Natural killer cell (primary cell): ENCODE measurements at regions of chr20 and their contacts with region 1.

Region 1: DNA sequence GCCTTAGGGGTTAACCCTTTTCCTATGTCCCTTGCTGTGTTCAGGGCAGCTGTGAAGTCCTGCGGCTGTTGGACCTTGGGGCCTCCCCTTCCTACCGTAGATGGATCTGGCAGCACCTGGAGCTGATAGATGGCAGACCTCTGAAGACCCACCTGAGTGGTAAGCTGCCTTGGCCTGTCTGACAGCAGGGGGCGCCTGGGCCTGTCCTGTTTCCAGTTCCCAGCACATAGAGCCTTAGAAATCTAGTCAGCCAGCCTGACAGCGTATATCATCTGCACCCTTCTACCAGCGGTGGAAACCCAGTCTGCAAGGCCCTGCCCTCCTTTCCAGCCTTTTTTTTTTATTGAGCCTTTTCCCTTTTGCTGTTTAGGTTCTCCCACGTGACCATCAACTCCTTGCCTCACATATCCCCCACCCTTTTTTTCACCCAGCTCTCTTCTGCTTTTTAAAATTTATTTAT is 26.6 kb downstream of the CNBD2 start:
- DNase-seq: peak; percentile 58 to 87
- ATAC-seq: peak; percentile 74 to 81 (median 78)
- H3K4me3 ChIP-seq: no peak overlapping the region
- H3K4me3 Mint-ChIP-seq: no peak overlapping the region
- H3K27ac ChIP-seq: no peak overlapping the region
- H3K27ac Mint-ChIP-seq: no peak overlapping the region
- H3K4me1 ChIP-seq: no peaks in the 10 kb centered on the region
- H3K4me1 Mint-ChIP-seq: peaks cover 0 to 7% of the 10 kb centered on the region in 2 donors
- H3K27me3 ChIP-seq: no peaks in the 10 kb centered on the region
- H3K27me3 Mint-ChIP-seq: peaks cover 0 to 8% of the 10 kb centered on the region in 2 donors
- CTCF ChIP-seq: peak; percentile 71

Region 2: GRCh38 chr20:36132802-36133211 is 137.8 kb after region 1 on chr20:
- intact Hi-C with region 1: loop called (anchors 1 kb)
- DNase-seq: no peak
- ATAC-seq: no peak
- H3K4me3 ChIP-seq: no peak overlapping the region
- H3K4me3 Mint-ChIP-seq: no peak overlapping the region
- H3K27ac ChIP-seq: no peak overlapping the region
- H3K27ac Mint-ChIP-seq: no peak overlapping the region
- H3K4me1 ChIP-seq: no peaks in the 10 kb centered on the region
- H3K4me1 Mint-ChIP-seq: no peaks in the 10 kb centered on the region
- H3K27me3 ChIP-seq: no peaks in the 10 kb centered on the region
- H3K27me3 Mint-ChIP-seq: no peaks in the 10 kb centered on the region
- CTCF ChIP-seq: no peak

Region 3: GRCh38 chr20:36199345-36200257 is 204.6 kb after region 1 on chr20:
- intact Hi-C with region 1: loop called (anchors 1 kb)
- DNase-seq: peak; percentile 65 to 83
- ATAC-seq: peak; percentile 71 to 80 (median 76)
- H3K4me3 ChIP-seq: no peak overlapping the region
- H3K4me3 Mint-ChIP-seq: no peak overlapping the region
- H3K27ac ChIP-seq: no peak overlapping the region
- H3K27ac Mint-ChIP-seq: no peak overlapping the region
- H3K4me1 ChIP-seq: peaks cover 6% of the 10 kb centered on the region
- H3K4me1 Mint-ChIP-seq: peaks cover 5 to 11% of the 10 kb centered on the region in 2 donors
- H3K27me3 ChIP-seq: no peaks in the 10 kb centered on the region
- H3K27me3 Mint-ChIP-seq: peaks cover 14 to 25% of the 10 kb centered on the region in 2 donors
- CTCF ChIP-seq: peak; percentile 92

Region 4: DNA sequence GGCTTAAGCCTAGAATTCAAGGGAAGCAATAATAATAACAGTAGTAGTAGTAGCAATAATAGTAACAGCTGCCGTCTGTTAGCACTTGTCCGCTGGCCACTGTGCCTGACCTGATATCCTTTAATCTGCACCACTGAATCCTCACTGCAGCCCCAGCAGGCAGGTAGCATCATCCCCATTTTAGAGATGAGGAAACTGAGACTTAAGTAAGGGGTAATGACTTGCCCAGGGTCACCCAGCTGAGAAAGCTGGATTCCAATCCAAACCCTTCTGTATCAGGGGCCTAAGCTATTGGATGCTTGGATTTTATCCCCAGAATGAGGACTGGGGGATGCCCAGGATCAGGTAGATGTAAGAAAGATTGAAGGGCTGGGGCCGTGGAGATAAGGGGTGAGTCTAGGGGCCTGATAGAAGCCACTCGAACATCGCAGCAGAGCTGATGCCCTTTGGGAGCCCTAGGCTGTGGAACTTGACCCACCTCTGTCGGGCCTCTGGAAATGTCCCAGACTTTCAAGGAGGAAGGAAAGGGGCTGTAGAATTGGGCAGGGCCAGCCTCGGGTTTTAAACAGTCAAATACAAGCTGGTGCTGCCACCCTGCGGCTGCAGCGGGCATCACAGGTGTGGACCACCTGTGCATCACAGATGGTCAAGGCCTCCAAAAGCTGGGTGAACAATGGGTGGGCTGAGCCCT is 444.2 kb after region 1 on chr20:
- intact Hi-C with region 1: loop called (anchors 5 kb)
- DNase-seq: peak; percentile 51 to 74
- ATAC-seq: peak in 2 of 3 donors; percentile 42 to 50
- H3K4me3 ChIP-seq: no peak overlapping the region
- H3K4me3 Mint-ChIP-seq: no peak overlapping the region
- H3K27ac ChIP-seq: no peak overlapping the region
- H3K27ac Mint-ChIP-seq: no peak overlapping the region
- H3K4me1 ChIP-seq: peaks cover 13% of the 10 kb centered on the region
- H3K4me1 Mint-ChIP-seq: peaks cover 6 to 12% of the 10 kb centered on the region in 2 donors
- H3K27me3 ChIP-seq: peaks cover 2% of the 10 kb centered on the region
- H3K27me3 Mint-ChIP-seq: peaks cover 0 to 3% of the 10 kb centered on the region in 2 donors
- CTCF ChIP-seq: peak; percentile 73